Ascending aorta (tissue), 2 donors: ENCODE measurements at regions of chr4 and their contacts with region 1.

Region 1: GRCh38 chr4:87390891-87391575 is at the start of gene HSD17B11:
- DNase-seq: peak; percentile 71 to 94
- H3K4me3 ChIP-seq: peak within 1 kb of the TSS; percentile 69
- H3K27ac ChIP-seq: peak within 1 kb of the TSS; percentile 86 to 89
- H3K4me1 ChIP-seq: peaks cover 0 to 11% of the 10 kb centered on the region in 2 donors
- H3K27me3 ChIP-seq: no peaks in the 10 kb centered on the region
- CTCF ChIP-seq: peak in 1 of 3 experiments; percentile 24
- total RNA-seq, gene HSD17B11: 29.8 TPM

Region 2: GRCh38 chr4:87422104-87423052 is 31.3 kb after region 1 on chr4 and contains the start of gene NUDT9:
- intact Hi-C with region 1: loop called (anchors 1 kb)
- DNase-seq: peak; percentile 92 to 97
- H3K4me3 ChIP-seq: peak within 1 kb of the TSS; percentile 74 to 80
- H3K27ac ChIP-seq: peak within 1 kb of the TSS; percentile 87 to 95
- H3K4me1 ChIP-seq: peaks cover 2 to 22% of the 10 kb centered on the region in 2 donors
- H3K27me3 ChIP-seq: no peaks in the 10 kb centered on the region
- CTCF ChIP-seq: no peak
- total RNA-seq, gene NUDT9: 35.9 TPM

Region 3: GRCh38 chr4:87916626-87917025 is 525.6 kb after region 1 on chr4:
- intact Hi-C with region 1: no loop called
- DNase-seq: no peak
- H3K4me3 ChIP-seq: no peak overlapping the region
- H3K27ac ChIP-seq: no peak overlapping the region
- H3K4me1 ChIP-seq: peaks cover 0 to 4% of the 10 kb centered on the region in 2 donors
- H3K27me3 ChIP-seq: no peaks in the 10 kb centered on the region
- CTCF ChIP-seq: no peak